PC-3 (cell line): ENCODE measurements at regions of chr3 and their contacts with region 1.

Region 1: DNA sequence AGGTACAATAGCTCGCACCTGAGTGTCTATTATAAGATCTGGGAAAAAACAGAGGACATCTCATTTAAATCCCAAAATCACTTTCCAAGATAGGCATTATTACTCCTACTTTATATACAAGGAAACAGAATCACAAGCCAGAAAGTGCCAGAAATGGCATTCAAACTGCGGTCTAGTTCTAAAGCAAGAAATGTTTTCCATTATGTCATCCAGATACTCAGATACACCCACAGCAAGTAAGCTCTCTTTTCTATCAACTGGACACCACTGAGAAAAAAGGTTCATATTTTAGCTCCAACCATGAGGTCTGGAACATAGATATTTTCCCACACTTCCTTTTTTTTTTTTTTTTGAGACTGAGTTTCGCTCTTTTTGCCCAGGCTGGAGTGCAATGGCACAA is 8.1 kb downstream of the SLC33A1 start:
- DNase-seq: no peak
- ATAC-seq: no peak
- H3K4me3 ChIP-seq: no peak overlapping the region
- H3K27ac ChIP-seq: no peak overlapping the region
- H3K4me1 ChIP-seq: peaks cover 5% of the 10 kb centered on the region; the same call in 1 of the 2 replicates
- H3K27me3 ChIP-seq: no peaks in the 10 kb centered on the region
- CTCF ChIP-seq: no peak

Region 2: GRCh38 chr3:155835341-155836071 is 10.6 kb before region 1 on chr3:
- CTCF ChIA-PET with region 1: interaction called, 13 read pairs
- POLR2A ChIA-PET with region 1: interaction called, 6 read pairs
- intact Hi-C with region 1: no loop called
- DNase-seq: no peak
- ATAC-seq: no peak
- H3K4me3 ChIP-seq: no peak overlapping the region
- H3K27ac ChIP-seq: no peak overlapping the region
- H3K4me1 ChIP-seq: no peaks in the 10 kb centered on the region
- H3K27me3 ChIP-seq: no peaks in the 10 kb centered on the region
- CTCF ChIP-seq: no peak

Region 3: DNA sequence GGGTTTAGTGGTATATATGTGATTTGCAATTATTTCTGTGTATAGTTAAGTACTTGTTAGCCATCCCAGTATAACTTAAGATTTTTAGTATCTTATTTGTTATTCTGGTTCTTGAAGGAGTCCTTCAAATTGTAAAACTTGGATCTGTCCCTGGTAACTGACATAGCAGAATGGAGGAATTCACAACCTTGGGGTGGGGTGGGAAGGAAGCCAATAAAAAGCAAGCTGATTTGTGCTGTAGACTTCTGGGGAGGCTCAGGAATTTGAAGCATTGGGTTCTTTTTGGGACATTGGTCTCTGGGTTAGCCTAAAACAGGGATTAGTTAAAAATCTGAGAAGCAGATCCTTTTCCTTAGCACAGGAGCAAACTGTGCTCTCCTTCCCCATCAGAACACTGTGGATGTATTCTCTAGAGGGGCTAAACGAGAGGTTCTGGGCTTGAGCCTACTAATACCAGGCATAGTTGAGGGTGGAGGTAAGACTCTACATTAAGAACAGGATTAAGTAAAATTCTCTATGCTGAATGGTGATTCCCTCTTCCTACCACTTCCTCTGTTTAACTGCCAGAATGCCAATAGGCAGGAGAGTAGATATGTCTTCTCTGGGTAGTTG is 66.6 kb after region 1 on chr3:
- CTCF ChIA-PET with region 1: no interaction called
- POLR2A ChIA-PET with region 1: no interaction called
- intact Hi-C with region 1: no loop called
- DNase-seq: no peak
- ATAC-seq: no peak
- H3K4me3 ChIP-seq: no peak overlapping the region
- H3K27ac ChIP-seq: no peak overlapping the region
- H3K4me1 ChIP-seq: no peaks in the 10 kb centered on the region
- H3K27me3 ChIP-seq: no peaks in the 10 kb centered on the region
- CTCF ChIP-seq: no peak